ENCODE measurements at regions of chr12 and their contacts with region 1.

Region 1: DNA sequence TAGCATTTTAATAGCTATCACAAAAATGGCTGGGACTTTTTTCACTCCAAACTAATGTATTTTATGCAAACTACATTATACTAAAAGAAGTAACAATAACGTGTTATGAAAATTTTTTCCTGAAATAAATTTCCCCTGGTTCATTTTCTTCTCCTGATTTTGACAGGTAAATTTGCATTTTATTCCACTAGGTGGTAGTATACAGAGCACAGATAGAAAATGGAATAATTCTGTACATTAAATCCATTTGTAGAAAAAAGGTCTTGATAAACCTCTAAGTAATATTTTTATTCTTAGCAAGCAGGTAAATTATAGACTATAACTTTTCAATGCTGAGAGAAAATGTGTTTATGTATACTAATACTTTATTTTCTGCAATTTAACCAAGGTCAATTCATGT is 96.5 kb downstream of the BCAT1 start:
- DNase-seq: no peak
- ATAC-seq: no peak
- H3K4me3 Mint-ChIP-seq: no peak overlapping the region
- H3K27ac Mint-ChIP-seq: no peak overlapping the region
- H3K4me1 Mint-ChIP-seq: peaks cover 22% of the 10 kb centered on the region
- H3K27me3 Mint-ChIP-seq: peaks cover 7% of the 10 kb centered on the region

Region 2: GRCh38 chr12:24649634-24650033 is 202.8 kb before region 1 on chr12:
- CTCF ChIA-PET with region 1: no interaction called
- POLR2A ChIA-PET with region 1: no interaction called
- intact Hi-C with region 1: no loop called
- DNase-seq: no peak
- ATAC-seq: no peak
- H3K4me3 Mint-ChIP-seq: no peak overlapping the region
- H3K27ac Mint-ChIP-seq: no peak overlapping the region
- H3K4me1 Mint-ChIP-seq: no peaks in the 10 kb centered on the region
- H3K27me3 Mint-ChIP-seq: no peaks in the 10 kb centered on the region

Region 3: GRCh38 chr12:24948757-24949722 is 96.6 kb after region 1 on chr12 and contains the start of gene BCAT1:
- CTCF ChIA-PET with region 1: interaction called, 3 read pairs
- POLR2A ChIA-PET with region 1: no interaction called
- intact Hi-C with region 1: loop called in 1 of 2 experiments (anchors 5 kb)
- DNase-seq: peak; percentile 71
- ATAC-seq: peak; percentile 45
- H3K4me3 Mint-ChIP-seq: peak within 1 kb of the TSS; percentile 74
- H3K27ac Mint-ChIP-seq: peak within 1 kb of the TSS; percentile 91
- H3K4me1 Mint-ChIP-seq: peaks cover 57% of the 10 kb centered on the region
- H3K27me3 Mint-ChIP-seq: peaks cover 49% of the 10 kb centered on the region
- total RNA-seq, gene BCAT1: 27.9 to 40.0 TPM

Region 4: GRCh38 chr12:24977060-24977459 is 124.6 kb after region 1 on chr12:
- CTCF ChIA-PET with region 1: no interaction called
- POLR2A ChIA-PET with region 1: no interaction called
- intact Hi-C with region 1: no loop called
- DNase-seq: no peak
- ATAC-seq: no peak
- H3K4me3 Mint-ChIP-seq: no peak overlapping the region
- H3K27ac Mint-ChIP-seq: no peak overlapping the region
- H3K4me1 Mint-ChIP-seq: no peaks in the 10 kb centered on the region
- H3K27me3 Mint-ChIP-seq: no peaks in the 10 kb centered on the region

Region 5: DNA sequence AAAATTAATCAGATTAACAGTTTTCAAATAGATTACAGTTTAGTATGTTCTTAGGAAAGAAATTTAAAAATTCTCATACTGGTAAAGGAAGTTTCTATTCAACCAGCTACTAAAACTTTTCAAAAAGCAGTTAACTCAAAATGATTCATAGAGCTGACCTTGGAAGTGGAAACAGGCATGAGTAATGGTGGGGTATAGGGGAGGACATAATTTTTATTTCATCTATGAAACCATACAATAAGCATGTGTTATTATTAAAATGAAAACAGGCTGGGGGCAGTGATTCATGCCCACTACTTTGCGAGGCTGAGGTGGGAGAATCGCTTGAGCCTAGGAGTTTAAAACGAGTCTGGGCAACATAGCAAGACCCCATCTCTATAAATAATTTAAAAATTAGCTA is 269.5 kb after region 1 on chr12:
- CTCF ChIA-PET with region 1: no interaction called
- POLR2A ChIA-PET with region 1: no interaction called
- intact Hi-C with region 1: loop called in 1 of 2 experiments (anchors 10 kb)
- DNase-seq: no peak
- ATAC-seq: peak; percentile 36
- H3K4me3 Mint-ChIP-seq: no peak overlapping the region
- H3K27ac Mint-ChIP-seq: no peak overlapping the region
- H3K4me1 Mint-ChIP-seq: peaks cover 4% of the 10 kb centered on the region
- H3K27me3 Mint-ChIP-seq: peaks cover 2% of the 10 kb centered on the region

Region 6: DNA sequence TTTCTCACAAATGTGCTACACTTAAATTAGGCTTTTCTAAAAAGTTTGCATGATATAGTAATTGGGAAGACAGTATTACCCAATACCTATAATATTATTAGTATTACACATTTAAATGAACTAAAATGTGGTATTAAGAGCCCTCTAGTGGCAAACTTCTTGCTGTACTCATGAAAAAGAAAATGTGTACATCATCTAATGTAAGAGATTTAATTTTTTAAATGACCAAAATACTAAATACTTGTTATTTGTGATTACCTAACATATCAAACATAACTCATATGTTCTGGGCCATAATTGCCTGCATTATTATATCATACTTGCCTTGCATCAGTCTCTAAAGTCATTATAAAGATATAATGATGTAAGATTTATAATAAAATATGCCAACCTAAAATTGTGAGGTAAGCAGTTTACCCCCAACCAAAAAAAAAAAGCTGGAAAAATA is 278.3 kb after region 1 on chr12:
- CTCF ChIA-PET with region 1: interaction called, 4 read pairs
- POLR2A ChIA-PET with region 1: no interaction called
- intact Hi-C with region 1: loop called (anchors 5 to 10 kb)
- DNase-seq: no peak
- ATAC-seq: no peak
- H3K4me3 Mint-ChIP-seq: no peak overlapping the region
- H3K27ac Mint-ChIP-seq: no peak overlapping the region
- H3K4me1 Mint-ChIP-seq: no peaks in the 10 kb centered on the region
- H3K27me3 Mint-ChIP-seq: no peaks in the 10 kb centered on the region